Activated naive CD4-positive, alpha-beta T cell treated with anti-CD3 and anti-CD28 coated beads for 36 hours (primary cell): ENCODE measurements at regions of chr14 and their contacts with region 1.

Region 1: DNA sequence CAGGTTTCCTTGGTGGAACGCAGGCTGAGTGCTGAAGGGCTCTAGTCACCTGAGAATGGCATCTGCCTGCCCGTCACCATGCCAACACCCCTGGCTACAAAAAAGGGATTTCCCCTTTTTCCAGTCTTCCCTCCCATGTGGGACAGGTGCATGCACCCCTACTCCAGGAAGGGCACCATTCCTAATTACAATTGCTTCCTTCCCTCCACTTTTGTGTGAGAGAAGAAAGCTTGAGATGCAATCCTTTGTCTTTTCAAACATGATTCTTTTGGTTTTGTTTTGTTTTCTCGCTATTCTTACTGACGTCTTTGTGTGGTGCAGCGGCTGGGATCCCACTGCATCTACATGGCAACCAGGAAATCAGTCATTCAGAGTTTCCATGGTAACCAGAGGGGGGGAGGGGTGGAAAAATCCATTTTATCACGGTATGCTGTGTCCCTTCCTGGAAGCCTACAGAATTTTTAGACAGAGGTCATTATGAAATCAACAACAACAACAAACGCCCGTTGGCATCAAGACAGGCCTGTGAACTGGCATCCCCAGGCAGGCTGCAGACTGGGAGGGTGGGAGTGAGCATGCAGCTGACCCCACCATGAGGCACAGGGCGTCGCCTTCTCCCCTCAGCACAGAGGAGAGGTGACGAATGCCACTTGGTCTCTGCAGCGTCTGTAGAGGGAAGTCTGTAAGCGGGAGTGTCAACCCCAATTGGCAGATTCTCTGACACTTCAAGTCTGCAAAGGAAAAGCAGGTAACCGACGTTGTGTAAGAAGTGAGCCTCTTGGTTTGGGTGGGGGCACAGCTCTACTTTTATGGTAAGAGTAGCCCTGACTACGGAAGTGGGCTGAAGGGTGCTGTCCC is 13.6 kb upstream of the GNG2 start:
- DNase-seq: peak; percentile 93
- H3K4me3 Mint-ChIP-seq: peak overlapping the region; percentile 85
- H3K27ac Mint-ChIP-seq: peak overlapping the region; percentile 100
- H3K4me1 Mint-ChIP-seq: peaks cover 72% of the 10 kb centered on the region
- H3K27me3 Mint-ChIP-seq: no peaks in the 10 kb centered on the region

Region 2: GRCh38 chr14:50520947-50521815 is 1325.7 kb before region 1 on chr14:
- CTCF ChIA-PET with region 1: no interaction called
- intact Hi-C with region 1: loop called (anchors 5 kb)
- DNase-seq: peak; percentile 87
- H3K4me3 Mint-ChIP-seq: no peak overlapping the region
- H3K27ac Mint-ChIP-seq: peak overlapping the region; percentile 89
- H3K4me1 Mint-ChIP-seq: peaks cover 53% of the 10 kb centered on the region
- H3K27me3 Mint-ChIP-seq: no peaks in the 10 kb centered on the region

Region 3: GRCh38 chr14:51651388-51652167 is 195.3 kb before region 1 on chr14 and contains the start of gene FRMD6:
- CTCF ChIA-PET with region 1: no interaction called
- intact Hi-C with region 1: loop called (anchors 2 kb)
- DNase-seq: peak; percentile 82
- H3K4me3 Mint-ChIP-seq: peak within 1 kb of the TSS; percentile 78
- H3K27ac Mint-ChIP-seq: peak within 1 kb of the TSS; percentile 41
- H3K4me1 Mint-ChIP-seq: peaks cover 21% of the 10 kb centered on the region
- H3K27me3 Mint-ChIP-seq: peaks cover 7% of the 10 kb centered on the region
- total RNA-seq, gene FRMD6: 3.0 to 3.2 TPM

Region 4: DNA sequence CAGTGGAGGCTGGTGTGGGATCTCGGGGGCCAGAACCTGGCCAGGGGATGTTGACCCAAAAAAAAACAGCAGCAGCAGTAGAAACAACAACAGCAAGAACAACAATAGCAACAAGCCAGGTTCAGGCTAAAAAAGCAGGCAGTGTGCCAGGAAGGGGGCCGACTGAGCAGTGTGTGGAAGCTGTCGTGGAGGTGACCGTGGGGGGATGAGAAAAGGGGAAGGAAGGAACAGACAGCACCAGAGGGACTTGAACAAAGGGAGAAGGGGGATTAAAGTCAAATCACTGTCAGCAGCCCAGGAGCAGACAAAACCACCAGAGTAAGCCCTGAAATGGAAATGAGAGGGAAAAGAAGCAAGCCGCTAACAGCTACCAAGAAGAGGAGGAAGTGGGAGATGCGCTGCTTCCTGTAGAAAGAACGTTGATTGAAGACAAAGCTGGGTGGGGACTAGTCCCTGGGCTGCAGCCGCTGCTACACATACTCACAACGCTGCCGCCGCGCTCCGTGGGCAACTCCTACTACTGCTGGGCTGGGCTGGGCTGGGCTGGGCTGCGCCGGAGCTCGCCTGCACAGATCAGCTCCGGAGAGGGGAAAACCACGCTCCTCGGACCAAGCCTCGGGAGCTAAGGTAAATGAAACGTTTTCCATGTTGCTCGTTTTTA is 13.4 kb after region 1 on chr14 and contains the start of gene GNG2:
- CTCF ChIA-PET with region 1: interaction called, 9 read pairs
- intact Hi-C with region 1: loop called (anchors 1 kb)
- DNase-seq: peak; percentile 91
- H3K4me3 Mint-ChIP-seq: peak within 1 kb of the TSS; percentile 96
- H3K27ac Mint-ChIP-seq: peak within 1 kb of the TSS; percentile 94
- H3K4me1 Mint-ChIP-seq: peaks cover 51% of the 10 kb centered on the region
- H3K27me3 Mint-ChIP-seq: no peaks in the 10 kb centered on the region
- total RNA-seq, gene GNG2: 176 to 181 TPM

Region 5: GRCh38 chr14:51901475-51902024 is 54.7 kb after region 1 on chr14:
- CTCF ChIA-PET with region 1: interaction called, 5 read pairs
- intact Hi-C with region 1: loop called (anchors 1 kb)
- DNase-seq: no peak
- H3K4me3 Mint-ChIP-seq: no peak overlapping the region
- H3K27ac Mint-ChIP-seq: peak overlapping the region; percentile 63
- H3K4me1 Mint-ChIP-seq: peaks cover 69% of the 10 kb centered on the region
- H3K27me3 Mint-ChIP-seq: no peaks in the 10 kb centered on the region

Region 6: DNA sequence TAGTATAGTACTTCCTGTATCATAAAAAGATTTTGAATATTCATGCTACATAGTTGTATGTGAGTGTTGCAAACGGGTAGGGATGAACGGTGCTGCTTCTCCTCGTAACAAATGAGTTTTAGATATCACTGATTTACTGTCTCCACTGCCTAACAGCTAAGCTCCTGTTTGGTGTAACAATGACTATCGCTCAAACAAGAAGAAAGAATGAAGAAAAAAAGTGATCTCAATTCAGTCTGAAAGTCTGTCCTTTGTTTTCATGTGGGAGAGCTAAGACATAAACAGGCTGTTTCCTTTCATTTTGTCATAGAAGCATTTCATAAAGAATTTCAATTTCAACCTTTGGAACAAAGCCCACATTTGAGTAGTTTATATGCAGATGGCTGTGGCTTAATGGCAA is 116.4 kb after region 1 on chr14:
- CTCF ChIA-PET with region 1: no interaction called
- intact Hi-C with region 1: no loop called
- DNase-seq: no peak
- H3K4me3 Mint-ChIP-seq: peak overlapping the region; percentile 54
- H3K27ac Mint-ChIP-seq: peak overlapping the region; percentile 34
- H3K4me1 Mint-ChIP-seq: peaks cover 43% of the 10 kb centered on the region
- H3K27me3 Mint-ChIP-seq: no peaks in the 10 kb centered on the region

Region 7: GRCh38 chr14:52015411-52016030 is 168.7 kb after region 1 on chr14:
- CTCF ChIA-PET with region 1: no interaction called
- intact Hi-C with region 1: no loop called
- DNase-seq: peak; percentile 23
- H3K4me3 Mint-ChIP-seq: no peak overlapping the region
- H3K27ac Mint-ChIP-seq: no peak overlapping the region
- H3K4me1 Mint-ChIP-seq: peaks cover 8% of the 10 kb centered on the region
- H3K27me3 Mint-ChIP-seq: peaks cover 4% of the 10 kb centered on the region

Region 8: GRCh38 chr14:52552063-52552988 is 705.5 kb after region 1 on chr14 and contains the starts of genes GPR137C and TXNDC16:
- CTCF ChIA-PET with region 1: no interaction called
- intact Hi-C with region 1: loop called (anchors 2 kb)
- DNase-seq: peak; percentile 100
- H3K4me3 Mint-ChIP-seq: peak within 1 kb of the TSS; percentile 88
- H3K27ac Mint-ChIP-seq: peak within 1 kb of the TSS; percentile 77
- H3K4me1 Mint-ChIP-seq: peaks cover 15% of the 10 kb centered on the region
- H3K27me3 Mint-ChIP-seq: no peaks in the 10 kb centered on the region
- total RNA-seq, gene GPR137C: 0.07 TPM in 1 of 2 experiments, not detected in the other
- total RNA-seq, gene TXNDC16: 4.5 to 4.6 TPM